ENCODE measurements at regions of chr1 and their contacts with region 1.

Region 1: DNA sequence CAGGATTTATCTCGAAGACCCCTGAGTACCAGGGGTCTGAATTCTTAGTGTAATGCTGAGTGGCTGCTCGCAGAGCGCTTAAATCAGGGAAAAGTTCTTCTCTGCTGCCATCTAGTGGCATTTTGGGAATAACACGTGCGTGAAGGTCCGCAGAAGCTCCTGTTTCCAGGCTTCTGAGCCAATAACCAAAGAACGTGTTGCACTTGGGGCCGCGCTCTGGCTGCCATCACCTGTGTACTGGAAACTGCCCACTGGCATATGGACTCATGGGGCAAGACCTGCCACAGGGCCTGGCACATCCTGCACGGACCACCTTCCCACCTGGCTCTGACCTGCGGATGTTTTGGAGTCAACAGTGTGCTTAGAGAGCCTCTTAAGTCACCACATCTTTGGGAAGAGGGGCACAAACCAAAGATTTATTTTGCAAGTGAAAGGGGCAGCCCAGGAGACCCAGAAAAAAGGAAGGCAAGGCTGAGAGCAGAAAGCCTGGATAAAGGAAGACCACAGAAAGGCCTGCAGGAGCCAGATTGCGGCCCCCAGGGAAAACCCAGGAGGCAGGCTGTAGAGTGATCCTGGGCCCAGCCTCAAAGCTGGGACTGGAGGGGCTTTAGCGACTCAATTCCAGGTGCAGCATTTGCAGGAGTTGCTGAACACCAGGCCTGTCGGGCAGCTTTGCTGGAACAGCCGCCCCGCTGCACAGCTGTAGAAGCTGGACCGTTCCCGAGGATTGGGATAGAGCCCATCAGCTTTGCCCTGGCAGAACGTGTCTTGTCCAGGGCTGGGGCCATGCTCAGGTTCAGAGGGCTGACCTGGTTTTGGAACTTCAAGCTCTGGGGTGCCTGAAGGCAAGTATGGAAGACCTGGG is 13.0 kb downstream of the CHIT1 start:
- DNase-seq: peak; percentile 55 to 56
- H3K4me3 ChIP-seq: no peak overlapping the region
- H3K27ac ChIP-seq: no peak overlapping the region
- H3K4me1 ChIP-seq: no peaks in the 10 kb centered on the region
- H3K27me3 ChIP-seq: peaks cover 18% of the 10 kb centered on the region; the same call in 1 of the 2 replicates
- CTCF ChIP-seq: peak; percentile 86

Region 2: DNA sequence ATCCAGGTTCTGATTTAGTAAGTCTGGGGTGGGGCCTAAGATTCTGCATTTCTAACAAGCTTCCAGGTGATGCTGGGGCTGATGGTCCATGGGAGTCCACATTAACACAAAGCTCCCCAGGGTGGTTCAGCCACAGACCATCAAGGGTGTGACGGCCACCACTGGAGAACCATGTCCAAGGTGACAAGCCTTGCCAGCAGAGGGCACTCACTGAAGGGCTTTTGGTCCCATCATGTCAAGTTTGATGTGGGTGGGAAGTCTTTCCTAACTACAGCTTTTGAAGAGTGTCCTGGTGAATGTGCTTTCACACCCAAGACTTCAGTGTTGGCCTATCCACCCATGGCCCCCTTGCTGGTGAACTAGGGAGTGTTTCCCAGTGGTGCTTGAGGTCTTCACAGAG is 941.9 kb before region 1 on chr1:
- CTCF ChIA-PET with region 1: no interaction called
- POLR2A ChIA-PET with region 1: no interaction called
- intact Hi-C with region 1: no loop called
- DNase-seq: peak; percentile 24 to 34
- H3K4me3 ChIP-seq: no peak overlapping the region
- H3K27ac ChIP-seq: no peak overlapping the region
- H3K4me1 ChIP-seq: 0 out of 2 replicates have a peak, but pooled peaks cover 2% of the 10 kb centered on the region
- H3K27me3 ChIP-seq: peaks cover 17% of the 10 kb centered on the region
- CTCF ChIP-seq: peak; percentile 69

Region 3: DNA sequence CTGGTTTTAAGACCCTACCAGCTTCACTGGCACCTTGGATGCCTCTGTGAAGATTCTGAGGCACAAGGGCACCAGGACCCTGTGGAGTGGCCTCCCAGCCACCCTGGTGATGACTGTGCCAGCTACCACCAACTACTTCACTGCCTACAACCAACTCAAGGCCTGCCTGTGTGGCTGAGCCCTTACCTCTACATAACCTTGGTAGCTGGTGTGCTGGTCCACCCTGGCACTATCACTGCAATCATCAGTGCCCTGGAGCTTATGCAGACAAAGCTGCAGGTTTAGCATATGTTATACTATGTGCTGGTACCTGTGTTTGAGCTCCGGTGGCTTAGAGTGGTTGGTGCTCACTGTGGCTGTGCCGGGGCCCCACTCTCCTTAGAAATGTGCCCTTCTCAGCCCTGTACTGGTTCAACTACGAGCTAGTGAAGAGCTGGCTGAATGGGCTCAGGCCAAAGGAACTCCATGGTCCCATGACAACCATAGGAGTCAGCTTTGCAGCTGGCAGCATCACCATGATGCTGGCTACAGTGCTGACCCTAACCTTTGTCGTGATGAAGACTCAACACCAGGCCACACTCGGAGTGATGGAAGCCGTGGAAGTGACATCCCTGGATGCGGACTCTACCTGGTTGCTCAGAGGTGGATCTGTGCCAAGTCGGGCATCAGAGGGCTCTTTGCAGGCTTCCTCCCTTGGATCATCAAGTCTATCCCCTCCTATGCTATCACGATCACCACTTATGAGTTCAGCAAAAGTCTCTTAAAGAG is 420.0 kb before region 1 on chr1:
- CTCF ChIA-PET with region 1: no interaction called
- POLR2A ChIA-PET with region 1: no interaction called
- intact Hi-C with region 1: no loop called
- DNase-seq: no peak
- H3K4me3 ChIP-seq: no peak overlapping the region
- H3K27ac ChIP-seq: no peak overlapping the region
- H3K4me1 ChIP-seq: peaks cover 21% of the 10 kb centered on the region
- H3K27me3 ChIP-seq: no peaks in the 10 kb centered on the region
- CTCF ChIP-seq: no peak

Region 4: DNA sequence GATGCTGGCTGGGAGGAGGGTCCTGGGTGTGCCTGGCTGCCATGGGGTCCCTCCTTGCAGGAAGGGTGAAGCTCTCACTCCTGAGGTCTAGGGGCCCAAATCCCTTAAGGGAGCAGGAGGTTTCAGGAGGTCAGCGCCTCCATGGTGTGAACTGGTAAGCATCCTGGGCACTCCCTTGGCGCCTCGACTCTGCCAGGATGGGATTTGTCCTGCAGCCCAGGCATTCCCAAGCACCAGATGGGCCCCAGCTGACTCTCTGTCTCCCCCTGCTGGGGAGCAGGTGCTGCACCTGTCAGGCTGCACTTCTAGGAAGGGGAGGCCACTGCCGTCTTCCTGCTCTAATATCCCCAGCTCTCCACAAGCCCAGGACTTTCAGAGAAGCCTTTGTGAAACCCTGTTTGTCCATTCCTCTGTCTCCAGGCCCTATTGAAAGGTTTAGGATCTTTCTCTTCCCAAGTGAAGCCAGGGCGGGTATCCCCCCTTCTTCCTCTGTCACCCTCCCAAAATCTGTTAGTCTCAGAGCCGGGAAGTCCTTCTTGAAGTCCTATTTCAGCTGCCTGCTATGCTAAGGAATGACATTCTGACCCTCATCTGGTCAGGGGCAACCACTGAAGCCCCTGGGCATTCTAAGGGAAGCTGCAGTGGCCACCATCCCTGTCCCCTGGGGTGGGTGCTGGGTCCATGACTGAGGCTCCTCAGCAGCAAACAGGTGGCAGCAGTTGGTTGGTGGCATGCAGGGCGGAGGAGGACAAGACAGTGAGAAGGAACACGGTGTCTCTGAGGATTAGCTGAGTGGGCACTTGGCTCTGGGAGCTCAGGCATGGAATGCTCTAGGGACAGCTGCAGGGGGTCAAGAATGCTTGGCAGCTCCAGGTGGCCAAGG is 44.1 kb before region 1 on chr1:
- CTCF ChIA-PET with region 1: no interaction called
- POLR2A ChIA-PET with region 1: no interaction called
- intact Hi-C with region 1: loop called (anchors 2 kb)
- DNase-seq: peak; percentile 46 to 74
- H3K4me3 ChIP-seq: no peak overlapping the region
- H3K27ac ChIP-seq: no peak overlapping the region
- H3K4me1 ChIP-seq: peaks cover 31% of the 10 kb centered on the region
- H3K27me3 ChIP-seq: no peaks in the 10 kb centered on the region
- CTCF ChIP-seq: peak; percentile 91